Naive thymus-derived CD4-positive, alpha-beta T cell (primary cell): ENCODE measurements at regions of chr1 and their contacts with region 1.

Region 1: DNA sequence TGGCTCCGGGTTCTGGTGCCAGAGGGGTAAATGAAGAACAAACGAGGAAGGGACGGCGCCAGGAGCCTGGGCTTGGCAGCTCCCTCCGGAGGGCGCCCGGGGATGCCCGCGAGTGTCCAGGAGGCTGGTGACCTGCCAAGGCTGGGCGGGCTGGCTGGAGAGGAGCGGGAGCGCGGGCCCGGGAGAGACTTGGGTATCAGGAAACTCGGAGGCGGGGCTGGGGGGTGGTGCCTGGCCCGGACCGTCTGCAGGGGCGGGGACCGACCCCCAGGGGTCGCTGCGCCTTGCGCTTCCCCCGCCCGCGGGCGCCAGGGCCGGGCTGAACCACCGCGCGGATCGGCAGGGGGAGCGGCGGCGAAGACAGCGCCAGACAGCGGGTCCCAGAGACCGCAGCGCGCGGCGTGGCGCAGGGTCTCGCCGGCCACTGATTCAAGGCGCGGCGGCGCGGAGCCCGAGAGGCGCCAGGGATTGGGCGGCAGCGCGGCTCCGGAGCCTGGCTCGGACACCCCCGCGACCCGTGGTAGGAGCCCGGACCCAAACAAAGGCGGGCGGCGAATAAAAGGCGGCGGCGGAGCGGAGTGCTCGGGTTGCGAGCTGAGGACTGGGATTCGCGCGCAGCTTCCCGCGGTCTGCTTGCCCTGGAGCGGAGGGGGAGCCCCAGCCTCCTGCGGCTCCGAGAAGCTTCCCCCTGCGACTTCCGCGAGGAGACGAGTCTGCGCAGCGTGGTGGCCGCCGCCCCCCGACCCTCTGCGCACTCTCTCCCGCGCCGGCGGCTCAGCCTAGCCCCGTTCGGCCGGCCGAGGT is at the start of gene DISP3:
- DNase-seq: peak; percentile 42 to 79 (median 62)
- ATAC-seq: peak; percentile 94
- H3K4me3 ChIP-seq: peak within 1 kb of the TSS; percentile 47
- H3K4me3 Mint-ChIP-seq: peak within 1 kb of the TSS; percentile 59 to 83 (median 66)
- H3K27ac ChIP-seq: no peak within 1 kb of the TSS
- H3K27ac Mint-ChIP-seq: no peak within 1 kb of the TSS
- H3K4me1 ChIP-seq: peaks cover 0 to 4% of the 10 kb centered on the region in 2 donors
- H3K4me1 Mint-ChIP-seq: peaks cover 4 to 18% (median 16%) of the 10 kb centered on the region in 7 donors
- H3K27me3 ChIP-seq: peaks cover 0 to 6% of the 10 kb centered on the region in 2 donors
- H3K27me3 Mint-ChIP-seq: peaks cover 32 to 43% (median 42%) of the 10 kb centered on the region in 5 donors
- total RNA-seq, gene DISP3: 0.14 to 0.95 (median 0.24) TPM

Region 2: DNA sequence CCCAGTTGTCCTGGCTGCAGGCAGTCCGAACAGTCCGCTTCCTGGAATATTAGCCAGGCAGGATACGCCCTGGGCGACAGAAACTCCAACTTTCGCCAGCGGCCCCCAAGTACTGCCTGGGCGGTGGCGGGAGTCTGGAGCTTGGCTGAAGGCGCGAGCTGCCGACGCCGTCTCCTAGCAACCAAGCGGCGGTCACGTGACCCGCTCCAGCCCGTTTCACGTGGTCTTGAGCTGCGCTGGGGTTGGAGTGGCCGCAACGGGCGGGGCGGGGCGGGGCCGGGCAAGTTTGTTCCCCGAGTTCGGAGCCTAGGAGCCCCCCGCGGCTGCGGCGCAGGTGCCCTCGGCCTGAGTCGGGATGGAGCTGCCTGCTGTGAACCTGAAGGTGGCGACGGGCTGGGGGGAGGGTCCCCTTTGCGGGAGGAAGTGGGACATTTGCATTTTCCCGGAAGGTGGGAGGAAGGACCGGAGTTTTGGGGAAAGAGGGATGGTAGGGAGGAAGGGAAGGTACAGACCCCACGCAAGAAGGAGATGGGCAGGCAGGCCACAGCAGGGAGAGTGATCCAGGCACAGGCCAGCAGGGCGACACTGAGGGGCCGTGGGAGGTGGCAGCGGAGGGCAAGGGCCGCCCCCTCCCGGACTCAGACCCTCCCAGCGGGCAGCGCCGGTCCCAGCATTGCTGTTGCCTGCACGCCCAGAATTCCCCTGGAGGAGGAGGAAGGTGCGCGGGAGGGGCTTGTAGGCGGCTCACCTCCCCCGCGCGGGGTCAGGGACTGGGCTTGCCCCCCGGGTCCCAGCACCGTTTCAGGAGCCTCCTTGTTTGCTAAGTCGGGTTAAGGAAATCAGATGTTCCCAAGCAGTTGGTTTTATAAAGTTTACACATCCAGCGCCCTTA is 257.3 kb after region 1 on chr1 and contains the start of gene AGTRAP:
- CTCF ChIA-PET with region 1: no interaction called
- POLR2A ChIA-PET with region 1: no interaction called
- intact Hi-C with region 1: loop called in 1 of 2 experiments (anchors 10 kb)
- DNase-seq: peak; percentile 62 to 84 (median 71)
- ATAC-seq: peak; percentile 78
- H3K4me3 ChIP-seq: peak within 1 kb of the TSS; percentile 92
- H3K4me3 Mint-ChIP-seq: peak within 1 kb of the TSS; percentile 84 to 96 (median 92)
- H3K27ac ChIP-seq: peak within 1 kb of the TSS; percentile 79
- H3K27ac Mint-ChIP-seq: peak within 1 kb of the TSS; percentile 3 to 95 (median 83)
- H3K4me1 ChIP-seq: peaks cover 38 to 52% of the 10 kb centered on the region in 2 donors
- H3K4me1 Mint-ChIP-seq: peaks cover 51 to 80% (median 76%) of the 10 kb centered on the region in 7 donors
- H3K27me3 ChIP-seq: no peaks in the 10 kb centered on the region
- H3K27me3 Mint-ChIP-seq: no peaks in the 10 kb centered on the region
- total RNA-seq, gene AGTRAP: 28.2 to 82.5 (median 32.7) TPM